ENCODE measurements at regions of chr20 and their contacts with region 1.

Region 1: GRCh38 chr20:32779500-32780211 is 17.5 kb downstream of the DNMT3B start:
- DNase-seq: no peak
- ATAC-seq: no peak
- H3K4me3 Mint-ChIP-seq: no peak overlapping the region
- H3K27ac Mint-ChIP-seq: no peak overlapping the region
- H3K4me1 Mint-ChIP-seq: peaks cover 9% of the 10 kb centered on the region
- H3K27me3 Mint-ChIP-seq: no peaks in the 10 kb centered on the region

Region 2: DNA sequence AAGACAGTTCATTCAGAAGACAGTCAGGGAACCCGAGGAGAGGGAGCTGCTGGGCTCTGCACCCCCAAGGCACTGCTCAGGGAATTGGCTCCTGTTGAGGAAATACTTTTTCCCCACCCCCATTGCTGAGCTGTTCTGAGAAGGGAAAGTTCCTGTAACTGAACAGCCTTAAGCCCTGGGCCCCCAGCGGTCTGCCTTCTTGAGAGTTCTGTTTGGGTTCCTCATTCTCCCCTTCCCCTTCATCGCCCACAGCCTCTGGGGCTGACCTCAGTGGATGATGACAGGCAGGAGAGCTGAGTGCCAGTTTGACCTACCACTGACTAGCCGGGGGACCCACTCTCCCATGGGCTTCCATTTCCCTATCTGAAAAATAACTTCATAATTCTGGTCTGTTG is 716.9 kb before region 1 on chr20:
- CTCF ChIA-PET with region 1: no interaction called
- POLR2A ChIA-PET with region 1: no interaction called
- intact Hi-C with region 1: no loop called
- DNase-seq: peak; percentile 26
- ATAC-seq: no peak
- H3K4me3 Mint-ChIP-seq: no peak overlapping the region
- H3K27ac Mint-ChIP-seq: no peak overlapping the region
- H3K4me1 Mint-ChIP-seq: peaks cover 7% of the 10 kb centered on the region
- H3K27me3 Mint-ChIP-seq: peaks cover 23% of the 10 kb centered on the region

Region 3: GRCh38 chr20:32521780-32522525 is 257.7 kb before region 1 on chr20:
- CTCF ChIA-PET with region 1: interaction called, 8 read pairs
- POLR2A ChIA-PET with region 1: no interaction called
- intact Hi-C with region 1: loop called (anchors 2 to 10 kb)
- DNase-seq: peak; percentile 83
- ATAC-seq: peak; percentile 78
- H3K4me3 Mint-ChIP-seq: no peak overlapping the region
- H3K27ac Mint-ChIP-seq: peak overlapping the region; percentile 43
- H3K4me1 Mint-ChIP-seq: peaks cover 59% of the 10 kb centered on the region
- H3K27me3 Mint-ChIP-seq: no peaks in the 10 kb centered on the region

Region 4: DNA sequence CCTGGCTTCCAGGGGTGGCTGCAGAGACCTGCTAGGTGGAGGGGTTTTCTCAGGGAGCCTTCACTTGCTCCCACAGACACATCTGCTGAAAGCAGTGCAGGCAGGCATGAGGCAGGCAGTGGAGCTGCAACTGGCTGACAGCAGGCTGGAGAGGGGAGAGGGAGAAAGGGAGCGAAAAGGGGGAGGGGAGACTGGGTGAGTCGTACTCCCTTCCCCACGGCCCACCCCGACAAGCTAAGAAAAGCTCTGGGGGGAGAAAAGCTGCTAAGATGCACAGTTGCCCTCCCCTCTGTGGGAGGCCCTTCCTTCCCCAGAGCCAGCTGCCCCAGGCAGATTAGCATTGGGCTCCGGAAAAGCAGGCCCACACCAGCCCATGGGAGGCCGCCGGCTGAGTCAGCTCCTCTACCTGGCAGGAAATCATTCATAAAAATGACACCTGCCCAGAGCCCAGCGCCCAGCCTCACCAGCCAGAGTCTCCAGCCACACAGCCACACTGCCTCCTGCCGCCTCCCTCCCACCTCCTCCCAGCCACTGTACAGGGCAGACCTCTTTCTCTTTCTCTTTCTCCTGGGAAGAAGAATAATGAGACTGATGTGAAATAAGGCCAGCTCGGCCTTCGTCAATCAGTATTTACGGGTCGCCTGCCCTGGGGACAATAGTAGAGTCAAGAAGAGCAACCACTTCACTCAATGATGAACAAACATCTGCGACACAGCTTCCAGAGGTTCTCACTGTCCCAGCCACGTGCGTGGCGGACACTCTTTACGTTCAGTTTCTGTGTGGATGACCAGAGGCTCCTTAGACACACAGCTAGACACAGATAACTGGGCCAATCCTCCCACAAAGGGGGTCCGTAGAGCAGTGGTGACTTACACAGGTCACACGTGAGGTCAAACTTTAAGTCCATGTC is 98.2 kb before region 1 on chr20:
- CTCF ChIA-PET with region 1: interaction called, 192 read pairs
- POLR2A ChIA-PET with region 1: interaction called, 3 read pairs
- intact Hi-C with region 1: no loop called
- DNase-seq: peak; percentile 34
- ATAC-seq: peak; percentile 65
- H3K4me3 Mint-ChIP-seq: no peak overlapping the region
- H3K27ac Mint-ChIP-seq: peak overlapping the region; percentile 42
- H3K4me1 Mint-ChIP-seq: peaks cover 7% of the 10 kb centered on the region
- H3K27me3 Mint-ChIP-seq: no peaks in the 10 kb centered on the region

Region 5: GRCh38 chr20:32737371-32738223 is 42.1 kb before region 1 on chr20:
- CTCF ChIA-PET with region 1: interaction called, 20 read pairs
- POLR2A ChIA-PET with region 1: no interaction called
- intact Hi-C with region 1: loop called in 1 of 2 experiments (anchors 5 kb)
- DNase-seq: peak; percentile 59
- ATAC-seq: peak; percentile 90
- H3K4me3 Mint-ChIP-seq: no peak overlapping the region
- H3K27ac Mint-ChIP-seq: peak overlapping the region; percentile 76
- H3K4me1 Mint-ChIP-seq: peaks cover 39% of the 10 kb centered on the region
- H3K27me3 Mint-ChIP-seq: no peaks in the 10 kb centered on the region

Region 6: GRCh38 chr20:32762149-32762753 is 17.4 kb before region 1 on chr20 and contains the start of gene DNMT3B:
- CTCF ChIA-PET with region 1: interaction called, 25 read pairs
- POLR2A ChIA-PET with region 1: no interaction called
- intact Hi-C with region 1: no loop called
- DNase-seq: peak; percentile 81
- ATAC-seq: peak; percentile 74
- H3K4me3 Mint-ChIP-seq: peak within 1 kb of the TSS; percentile 74
- H3K27ac Mint-ChIP-seq: peak within 1 kb of the TSS; percentile 22
- H3K4me1 Mint-ChIP-seq: peaks cover 10% of the 10 kb centered on the region
- H3K27me3 Mint-ChIP-seq: peaks cover 7% of the 10 kb centered on the region
- total RNA-seq, gene DNMT3B: 1.4 to 1.6 TPM

Region 7: DNA sequence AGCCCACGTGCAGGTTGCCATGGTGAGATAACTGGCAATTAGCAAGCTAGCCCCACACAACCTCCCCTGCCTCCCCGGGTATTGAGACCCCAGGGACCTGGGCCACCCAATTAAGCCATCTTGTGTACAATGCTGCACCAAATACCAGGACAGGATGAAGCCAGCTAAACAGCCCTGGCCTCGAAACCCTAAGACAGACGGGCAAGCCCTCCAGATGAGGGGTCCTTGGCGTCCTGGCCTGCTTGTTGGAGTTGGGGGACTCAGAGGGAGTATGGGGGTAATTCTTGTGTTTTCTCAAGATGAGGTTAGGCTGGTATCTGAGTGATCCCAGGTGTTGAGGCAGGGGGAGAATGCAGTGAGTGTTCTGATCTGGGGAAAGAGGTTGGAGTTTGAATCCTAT is 31.3 kb after region 1 on chr20:
- CTCF ChIA-PET with region 1: interaction called, 12 read pairs
- POLR2A ChIA-PET with region 1: no interaction called
- intact Hi-C with region 1: no loop called
- DNase-seq: no peak
- ATAC-seq: no peak
- H3K4me3 Mint-ChIP-seq: no peak overlapping the region
- H3K27ac Mint-ChIP-seq: no peak overlapping the region
- H3K4me1 Mint-ChIP-seq: no peaks in the 10 kb centered on the region
- H3K27me3 Mint-ChIP-seq: no peaks in the 10 kb centered on the region

Region 8: DNA sequence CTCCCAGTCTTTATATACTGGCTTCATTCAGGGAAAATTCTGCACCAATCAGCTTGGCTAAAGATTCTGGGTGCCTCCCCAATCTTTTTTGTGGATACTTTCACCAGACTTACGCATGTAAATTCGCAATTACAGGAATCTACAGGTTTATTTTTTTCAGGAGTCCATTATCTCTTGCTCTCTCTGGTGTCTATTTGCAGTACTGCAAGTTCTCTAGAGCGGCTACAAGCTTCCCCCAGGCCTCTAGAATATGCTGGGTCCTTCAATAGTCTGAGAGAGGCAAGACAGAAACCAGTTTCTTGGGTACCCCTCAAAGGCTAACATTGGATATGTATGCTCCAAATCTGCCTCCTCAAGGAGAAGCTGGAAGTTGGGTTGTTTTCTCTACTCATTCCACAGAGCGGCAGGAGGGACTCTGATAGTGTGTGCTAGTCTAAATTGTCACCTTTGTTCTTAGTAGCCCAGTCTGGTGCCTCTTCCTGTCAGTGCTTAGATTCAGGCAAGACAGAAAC is 166.1 kb after region 1 on chr20:
- CTCF ChIA-PET with region 1: interaction called, 12 read pairs
- POLR2A ChIA-PET with region 1: no interaction called
- intact Hi-C with region 1: no loop called
- DNase-seq: peak; percentile 45
- ATAC-seq: peak; percentile 93
- H3K4me3 Mint-ChIP-seq: no peak overlapping the region
- H3K27ac Mint-ChIP-seq: peak overlapping the region; percentile 64
- H3K4me1 Mint-ChIP-seq: peaks cover 36% of the 10 kb centered on the region
- H3K27me3 Mint-ChIP-seq: no peaks in the 10 kb centered on the region

Region 9: GRCh38 chr20:33351696-33352095 is 572.0 kb after region 1 on chr20:
- CTCF ChIA-PET with region 1: no interaction called
- POLR2A ChIA-PET with region 1: no interaction called
- intact Hi-C with region 1: no loop called
- DNase-seq: no peak
- ATAC-seq: no peak
- H3K4me3 Mint-ChIP-seq: no peak overlapping the region
- H3K27ac Mint-ChIP-seq: no peak overlapping the region
- H3K4me1 Mint-ChIP-seq: no peaks in the 10 kb centered on the region
- H3K27me3 Mint-ChIP-seq: no peaks in the 10 kb centered on the region

Measured in activated CD4-positive, alpha-beta T cell treated with anti-CD3 and anti-CD28 coated beads for 36 hours (primary cell).